ENCODE measurements at regions of chr11 and their contacts with region 1.

Region 1: GRCh38 chr11:33970984-33971466 is 79.1 kb upstream of the LMO2 start:
- DNase-seq: peak; percentile 73
- CTCF ChIP-seq: peak; percentile 86

Region 2: GRCh38 chr11:33670250-33671011 is 300.6 kb before region 1 on chr11:
- in situ Hi-C with region 1: no loop called
- DNase-seq: no peak
- CTCF ChIP-seq: no peak

Region 3: GRCh38 chr11:33857933-33858371 is 113.1 kb before region 1 on chr11:
- in situ Hi-C with region 1: loop called (anchors 5 kb)
- DNase-seq: peak; percentile 69
- CTCF ChIP-seq: peak; percentile 95